Left colon (tissue), 2 donors: ENCODE measurements at regions of chr4 and their contacts with region 1.

Region 1: GRCh38 chr4:1346781-1347409 is at the start of gene UVSSA:
- DNase-seq: peak; percentile 100
- ATAC-seq: peak; percentile 86
- total RNA-seq, gene UVSSA: 26.7 to 33.1 TPM

Region 2: DNA sequence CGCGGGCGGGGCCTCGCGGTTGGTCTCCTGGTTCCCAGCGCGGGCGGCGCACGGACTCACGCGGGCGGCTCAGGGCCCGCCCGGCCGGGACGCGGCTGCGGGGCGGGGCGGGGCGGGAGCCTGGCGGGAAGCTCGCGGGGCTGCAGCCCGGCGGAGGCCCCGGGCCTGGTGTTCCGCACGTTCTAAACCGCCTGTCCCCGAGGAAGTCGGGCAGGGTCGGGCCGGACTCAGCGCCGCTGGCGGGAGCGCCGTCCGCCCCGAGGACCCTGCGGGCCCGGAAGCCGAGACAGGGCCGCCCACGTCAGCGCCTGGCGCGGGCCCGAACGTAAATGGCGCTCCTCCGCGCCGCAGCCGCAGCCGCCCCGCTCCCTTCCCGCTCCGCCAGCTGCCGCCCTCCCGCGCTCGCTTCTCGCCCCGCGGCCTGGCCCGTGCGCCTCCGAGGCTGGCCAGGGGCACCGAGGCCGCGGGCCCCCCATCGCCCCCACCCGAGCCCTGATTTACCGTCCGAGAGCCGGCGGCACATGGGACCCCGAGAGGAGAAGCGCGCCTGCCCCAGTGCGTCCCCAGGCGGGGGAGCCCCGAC is 97.7 kb before region 1 on chr4:
- intact Hi-C with region 1: loop called in 1 of 2 experiments (anchors 10 kb)
- DNase-seq: peak; percentile 79 to 89
- ATAC-seq: peak; percentile 72

Region 3: DNA sequence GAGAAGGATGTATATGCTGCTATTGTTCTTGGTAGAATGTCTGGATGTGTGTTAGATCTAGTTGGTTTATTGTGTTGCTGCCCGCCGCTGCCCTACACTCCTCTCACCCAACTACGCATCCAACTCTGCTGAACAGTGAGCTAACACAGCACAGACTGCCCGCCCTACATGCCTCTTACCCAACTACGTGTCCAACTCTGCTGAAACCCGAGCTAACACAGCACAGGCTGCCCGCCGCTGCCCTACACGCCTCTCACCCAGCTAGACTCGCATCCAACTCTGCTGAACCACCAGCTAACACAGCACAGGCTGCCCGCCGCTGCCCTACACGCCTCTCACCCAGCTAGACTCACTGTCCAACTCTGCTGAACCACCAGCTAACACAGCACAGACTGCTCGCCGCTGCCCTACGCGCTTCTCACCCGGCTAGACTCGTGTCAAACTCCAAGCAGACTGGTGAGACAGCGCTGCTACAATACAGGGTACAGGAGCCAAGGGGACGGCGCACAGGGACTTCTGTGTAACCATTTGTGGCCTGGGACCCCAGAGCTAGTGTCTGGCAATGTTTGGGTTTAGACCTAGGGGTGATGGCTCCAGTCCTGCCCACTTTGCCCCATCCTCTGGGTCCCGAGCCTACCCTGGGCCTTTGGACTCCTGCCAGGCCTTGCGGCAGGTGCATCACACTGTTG is 86.3 kb before region 1 on chr4:
- intact Hi-C with region 1: loop called in 1 of 2 experiments (anchors 10 kb)
- DNase-seq: no peak
- ATAC-seq: no peak

Region 4: DNA sequence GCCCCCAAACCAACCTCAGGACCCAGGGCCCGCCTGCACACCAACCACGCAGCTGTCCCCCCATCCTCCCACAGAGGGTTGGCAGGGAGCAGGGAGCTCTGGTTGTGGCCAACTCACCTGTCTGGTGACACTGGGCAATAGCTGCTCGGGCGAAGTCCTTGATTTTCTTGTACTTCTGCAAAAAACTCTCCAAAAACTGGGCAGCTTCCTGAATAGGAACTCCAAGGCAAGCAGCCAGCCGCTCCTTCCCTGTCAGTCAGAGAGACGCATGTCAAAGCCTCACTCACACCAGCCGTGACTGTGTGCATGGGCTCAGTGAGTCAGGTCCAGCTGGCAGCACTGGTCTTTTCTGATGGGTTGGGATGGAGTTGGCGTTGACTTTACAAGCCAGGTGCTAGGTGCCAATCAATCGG is 738.6 kb after region 1 on chr4:
- intact Hi-C with region 1: no loop called
- DNase-seq: no peak
- ATAC-seq: no peak